GM12878 (cell line): ENCODE measurements at regions of chr6 and their contacts with region 1.

Region 1: GRCh38 chr6:34986845-34987246 is 97.8 kb downstream of the ANKS1A start:
- DNase-seq: no peak
- ATAC-seq: peak; percentile 79
- H3K4me3 ChIP-seq: no peak overlapping the region
- H3K27ac ChIP-seq: no peak overlapping the region
- H3K4me1 ChIP-seq: peaks cover 3% of the 10 kb centered on the region
- H3K27me3 ChIP-seq: no peaks in the 10 kb centered on the region
- CTCF ChIP-seq: peak; percentile 70 to 83 (median 79)
- EP300 ChIP-seq: no peak
- POLR2A ChIP-seq: no peak
- RAD21 ChIP-seq: peak; percentile 94

Region 2: GRCh38 chr6:34973547-34974248 is 13.1 kb before region 1 on chr6:
- CTCF ChIA-PET with region 1: interaction called, 15 read pairs
- POLR2A ChIA-PET with region 1: no interaction called
- RAD21 ChIA-PET with region 1: no interaction called
- SMC1A ChIA-PET with region 1: interaction called, 4 read pairs
- in situ Hi-C with region 1: no loop called
- intact Hi-C with region 1: no loop called
- DNase-seq: no peak
- ATAC-seq: no peak
- H3K4me3 ChIP-seq: no peak overlapping the region
- H3K27ac ChIP-seq: no peak overlapping the region
- H3K4me1 ChIP-seq: no peaks in the 10 kb centered on the region
- H3K27me3 ChIP-seq: no peaks in the 10 kb centered on the region
- CTCF ChIP-seq: peak; percentile 15 to 34 (median 23); a peak in 2 of 6 replicates
- EP300 ChIP-seq: no peak
- POLR2A ChIP-seq: no peak
- RAD21 ChIP-seq: peak; percentile 46; the same call in 1 of the 2 replicates

Region 3: DNA sequence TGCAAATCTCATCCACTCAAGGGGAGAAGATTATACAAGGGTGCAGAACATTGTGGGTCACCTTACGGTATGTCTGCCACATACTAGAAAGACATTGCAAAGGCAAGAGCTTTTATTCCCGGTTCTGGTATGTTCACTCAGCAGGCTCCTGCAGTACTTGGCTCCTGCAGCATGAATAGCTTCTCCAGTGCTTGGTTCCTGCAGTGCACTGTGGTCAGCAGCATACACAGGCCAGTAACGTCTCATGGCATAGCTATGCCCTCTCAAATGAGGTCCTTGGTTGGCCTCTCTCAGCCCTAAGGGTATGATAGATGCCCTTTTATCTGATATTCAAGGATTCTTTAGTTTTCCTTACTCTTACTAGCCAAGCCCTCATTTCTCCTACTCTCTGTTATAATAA is 141.7 kb after region 1 on chr6:
- CTCF ChIA-PET with region 1: interaction called, 9 read pairs
- POLR2A ChIA-PET with region 1: no interaction called
- RAD21 ChIA-PET with region 1: no interaction called
- SMC1A ChIA-PET with region 1: interaction called, 11 read pairs
- in situ Hi-C with region 1: no loop called
- intact Hi-C with region 1: no loop called
- DNase-seq: no peak
- ATAC-seq: no peak
- H3K4me3 ChIP-seq: no peak overlapping the region
- H3K27ac ChIP-seq: no peak overlapping the region
- H3K4me1 ChIP-seq: no peaks in the 10 kb centered on the region
- H3K27me3 ChIP-seq: no peaks in the 10 kb centered on the region
- CTCF ChIP-seq: no peak
- EP300 ChIP-seq: no peak
- POLR2A ChIP-seq: no peak
- RAD21 ChIP-seq: no peak